Left ventricle myocardium inferior (tissue), 1 donor: ENCODE measurements at regions of chr1 and their contacts with region 1.

Region 1: GRCh38 chr1:171801487-171801891 is 20.0 kb downstream of the METTL13 start:
- DNase-seq: no peak
- H3K4me3 ChIP-seq: no peak overlapping the region
- H3K27ac ChIP-seq: no peak overlapping the region
- H3K4me1 ChIP-seq: peaks cover 37% of the 10 kb centered on the region
- H3K27me3 ChIP-seq: no peaks in the 10 kb centered on the region
- CTCF ChIP-seq: peak; percentile 84

Region 2: GRCh38 chr1:171940373-171940772 is 138.9 kb after region 1 on chr1:
- intact Hi-C with region 1: no loop called
- DNase-seq: no peak
- H3K4me3 ChIP-seq: no peak overlapping the region
- H3K27ac ChIP-seq: no peak overlapping the region
- H3K4me1 ChIP-seq: peaks cover 3% of the 10 kb centered on the region
- H3K27me3 ChIP-seq: no peaks in the 10 kb centered on the region
- CTCF ChIP-seq: no peak

Region 3: GRCh38 chr1:171984850-171985485 is 183.5 kb after region 1 on chr1:
- intact Hi-C with region 1: loop called (anchors 5 kb)
- DNase-seq: no peak
- H3K4me3 ChIP-seq: no peak overlapping the region
- H3K27ac ChIP-seq: no peak overlapping the region
- H3K4me1 ChIP-seq: peaks cover 11% of the 10 kb centered on the region
- H3K27me3 ChIP-seq: no peaks in the 10 kb centered on the region
- CTCF ChIP-seq: peak; percentile 80